Activated CD8-positive, alpha-beta T cell treated with anti-CD3 and anti-CD28 coated beads for 36 hours (primary cell): ENCODE measurements at regions of chr1 and their contacts with region 1.

Region 1: DNA sequence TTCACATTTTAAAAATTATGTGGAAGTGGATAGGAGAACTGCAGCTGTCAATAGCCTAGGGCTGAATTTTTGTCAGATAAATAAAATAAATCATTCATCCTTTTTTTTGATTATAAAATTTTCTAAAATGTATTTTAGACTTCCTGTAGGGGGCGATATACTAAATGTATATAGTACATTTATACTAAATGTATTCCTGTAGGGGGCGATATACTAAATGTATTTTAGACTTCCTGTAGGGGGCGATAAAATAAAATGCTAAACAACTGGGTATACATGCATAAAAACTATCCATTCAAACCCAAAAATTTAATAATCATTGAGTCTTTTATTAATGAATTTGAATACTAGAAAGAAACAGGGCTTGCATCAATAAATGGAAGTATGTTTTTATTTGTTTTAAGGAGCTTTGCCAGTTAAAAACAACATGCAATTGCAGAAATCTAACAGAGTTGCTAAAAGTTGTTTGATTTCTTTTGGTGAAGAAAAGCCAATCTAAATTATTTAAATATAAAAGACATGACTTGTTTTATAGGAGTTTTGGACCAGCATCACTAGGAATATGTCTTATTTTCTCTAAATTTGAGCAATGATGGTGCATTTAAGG is 31.4 kb downstream of the CLCA1 start:
- DNase-seq: no peak
- ATAC-seq: peak; percentile 48
- H3K4me3 Mint-ChIP-seq: no peak overlapping the region
- H3K27ac Mint-ChIP-seq: no peak overlapping the region
- H3K4me1 Mint-ChIP-seq: peaks cover 8% of the 10 kb centered on the region
- H3K27me3 Mint-ChIP-seq: no peaks in the 10 kb centered on the region
- CTCF ChIP-seq: peak; percentile 100

Region 2: DNA sequence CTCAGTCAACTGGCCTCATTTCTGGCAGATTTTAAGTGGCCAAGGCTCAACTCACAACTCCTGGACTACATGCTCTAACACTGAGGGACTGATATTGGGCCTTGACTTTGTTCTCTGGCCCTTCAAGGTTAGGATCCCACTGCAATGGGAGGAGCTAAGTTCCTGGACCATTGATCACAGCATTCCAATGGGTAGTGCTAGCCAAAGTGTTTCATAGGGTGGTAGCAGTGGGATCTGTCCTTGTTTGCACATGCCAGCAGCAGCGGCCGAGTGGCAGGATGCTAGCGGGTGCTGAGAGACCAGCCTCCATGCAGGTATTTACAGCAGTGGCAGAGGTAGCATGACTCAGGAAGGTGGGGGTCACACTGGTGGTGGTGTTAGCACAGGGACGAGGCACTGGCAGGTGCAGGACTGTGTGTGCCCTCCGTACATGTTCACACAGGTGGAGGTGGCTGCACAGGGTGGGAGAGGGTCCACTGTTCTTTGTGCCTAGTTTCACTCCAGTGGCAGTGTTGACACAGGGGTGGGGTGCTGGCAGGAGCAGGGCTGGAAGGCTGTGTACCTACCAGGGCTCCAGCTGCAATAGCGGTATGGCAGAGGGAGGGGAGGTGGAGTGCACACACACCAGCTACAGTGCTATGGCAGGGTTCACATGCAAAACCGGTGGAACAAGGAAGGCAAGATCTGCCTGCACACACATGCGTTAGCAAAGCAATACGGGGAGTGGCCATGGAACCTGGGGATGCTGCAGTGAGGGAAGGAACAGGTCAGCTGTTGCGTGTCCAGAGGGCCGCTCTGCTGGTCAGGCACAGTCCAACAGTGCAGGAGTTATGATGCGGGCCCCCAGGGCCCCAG is 395.3 kb before region 1 on chr1:
- CTCF ChIA-PET with region 1: no interaction called
- POLR2A ChIA-PET with region 1: no interaction called
- intact Hi-C with region 1: no loop called
- DNase-seq: no peak
- ATAC-seq: no peak
- H3K4me3 Mint-ChIP-seq: no peak overlapping the region
- H3K27ac Mint-ChIP-seq: no peak overlapping the region
- H3K4me1 Mint-ChIP-seq: no peaks in the 10 kb centered on the region
- H3K27me3 Mint-ChIP-seq: no peaks in the 10 kb centered on the region
- CTCF ChIP-seq: no peak

Region 3: DNA sequence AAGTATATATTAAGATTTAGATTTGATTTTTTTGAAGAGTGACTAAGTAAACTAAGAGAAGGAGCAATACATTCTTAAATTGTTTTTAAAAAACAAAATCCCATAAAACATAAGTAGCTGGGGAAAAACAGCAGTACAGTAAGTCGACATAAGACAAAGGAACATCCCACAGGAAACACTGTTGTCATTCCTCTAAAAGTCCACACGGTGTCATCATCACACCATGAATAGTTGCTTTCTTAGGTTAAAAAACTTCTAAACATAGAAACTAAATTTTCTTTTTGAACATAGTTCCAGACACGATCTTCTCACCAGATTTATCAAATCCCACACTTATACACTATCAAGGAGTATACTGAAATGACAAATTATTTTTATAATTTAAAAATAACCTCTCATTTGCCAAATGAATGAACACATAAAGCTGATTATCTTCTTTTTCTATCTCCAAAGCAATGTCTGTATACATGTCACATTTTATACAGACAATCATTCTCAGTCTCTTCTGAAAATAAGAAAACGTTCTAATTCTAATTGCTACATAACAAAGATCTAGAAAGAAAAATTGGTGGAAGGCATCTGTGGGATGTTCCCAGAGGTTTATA is 119.7 kb before region 1 on chr1:
- CTCF ChIA-PET with region 1: interaction called, 67 read pairs
- POLR2A ChIA-PET with region 1: no interaction called
- intact Hi-C with region 1: loop called (anchors 1 kb)
- DNase-seq: peak; percentile 10
- ATAC-seq: peak; percentile 68
- H3K4me3 Mint-ChIP-seq: no peak overlapping the region
- H3K27ac Mint-ChIP-seq: no peak overlapping the region
- H3K4me1 Mint-ChIP-seq: peaks cover 8% of the 10 kb centered on the region
- H3K27me3 Mint-ChIP-seq: no peaks in the 10 kb centered on the region
- CTCF ChIP-seq: peak; percentile 81

Region 4: GRCh38 chr1:86419277-86419903 is 80.7 kb before region 1 on chr1:
- CTCF ChIA-PET with region 1: interaction called, 79 read pairs
- POLR2A ChIA-PET with region 1: no interaction called
- intact Hi-C with region 1: no loop called
- DNase-seq: peak; percentile 66
- ATAC-seq: peak; percentile 92
- H3K4me3 Mint-ChIP-seq: peak overlapping the region; percentile 14
- H3K27ac Mint-ChIP-seq: no peak overlapping the region
- H3K4me1 Mint-ChIP-seq: peaks cover 4% of the 10 kb centered on the region
- H3K27me3 Mint-ChIP-seq: no peaks in the 10 kb centered on the region
- CTCF ChIP-seq: peak; percentile 57

Region 5: DNA sequence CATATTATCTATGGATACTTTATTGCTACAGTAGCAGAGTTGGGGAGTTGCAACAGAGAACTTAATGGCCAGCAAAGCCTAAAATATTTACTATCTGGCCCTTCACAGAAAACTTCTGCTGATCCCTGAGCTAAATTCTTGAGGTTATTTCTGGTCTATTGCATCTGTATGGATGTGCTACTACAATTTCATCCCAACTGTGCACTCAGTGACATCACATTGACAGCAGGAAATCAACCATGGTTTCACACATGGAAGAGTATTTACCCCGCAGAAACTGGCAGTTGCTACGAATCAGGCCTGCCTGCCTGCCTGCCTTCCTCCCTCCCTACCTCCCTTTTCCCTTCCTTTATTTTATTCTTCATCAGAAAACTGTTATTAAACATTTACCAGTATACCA is 64.0 kb before region 1 on chr1:
- CTCF ChIA-PET with region 1: interaction called, 16 read pairs
- POLR2A ChIA-PET with region 1: no interaction called
- intact Hi-C with region 1: no loop called
- DNase-seq: no peak
- ATAC-seq: no peak
- H3K4me3 Mint-ChIP-seq: no peak overlapping the region
- H3K27ac Mint-ChIP-seq: no peak overlapping the region
- H3K4me1 Mint-ChIP-seq: no peaks in the 10 kb centered on the region
- H3K27me3 Mint-ChIP-seq: peaks cover 11% of the 10 kb centered on the region
- CTCF ChIP-seq: no peak

Region 6: GRCh38 chr1:86470859-86471258 is 29.2 kb before region 1 on chr1:
- CTCF ChIA-PET with region 1: interaction called, 41 read pairs
- POLR2A ChIA-PET with region 1: no interaction called
- intact Hi-C with region 1: no loop called
- DNase-seq: no peak
- ATAC-seq: no peak
- H3K4me3 Mint-ChIP-seq: no peak overlapping the region
- H3K27ac Mint-ChIP-seq: no peak overlapping the region
- H3K4me1 Mint-ChIP-seq: no peaks in the 10 kb centered on the region
- H3K27me3 Mint-ChIP-seq: peaks cover 10% of the 10 kb centered on the region
- CTCF ChIP-seq: no peak

Region 7: GRCh38 chr1:86515597-86515996 is 15.5 kb after region 1 on chr1:
- CTCF ChIA-PET with region 1: interaction called, 11 read pairs
- POLR2A ChIA-PET with region 1: no interaction called
- intact Hi-C with region 1: no loop called
- DNase-seq: no peak
- ATAC-seq: no peak
- H3K4me3 Mint-ChIP-seq: no peak overlapping the region
- H3K27ac Mint-ChIP-seq: no peak overlapping the region
- H3K4me1 Mint-ChIP-seq: no peaks in the 10 kb centered on the region
- H3K27me3 Mint-ChIP-seq: no peaks in the 10 kb centered on the region
- CTCF ChIP-seq: no peak

Region 8: GRCh38 chr1:86741947-86742572 is 242.0 kb after region 1 on chr1:
- CTCF ChIA-PET with region 1: interaction called, 5 read pairs
- POLR2A ChIA-PET with region 1: no interaction called
- intact Hi-C with region 1: loop called (anchors 5 kb)
- DNase-seq: peak; percentile 58
- ATAC-seq: no peak
- H3K4me3 Mint-ChIP-seq: no peak overlapping the region
- H3K27ac Mint-ChIP-seq: no peak overlapping the region
- H3K4me1 Mint-ChIP-seq: no peaks in the 10 kb centered on the region
- H3K27me3 Mint-ChIP-seq: no peaks in the 10 kb centered on the region
- CTCF ChIP-seq: peak; percentile 70